GM10248 (cell line): ENCODE measurements at regions of chr15 and their contacts with region 1.

Region 1: DNA sequence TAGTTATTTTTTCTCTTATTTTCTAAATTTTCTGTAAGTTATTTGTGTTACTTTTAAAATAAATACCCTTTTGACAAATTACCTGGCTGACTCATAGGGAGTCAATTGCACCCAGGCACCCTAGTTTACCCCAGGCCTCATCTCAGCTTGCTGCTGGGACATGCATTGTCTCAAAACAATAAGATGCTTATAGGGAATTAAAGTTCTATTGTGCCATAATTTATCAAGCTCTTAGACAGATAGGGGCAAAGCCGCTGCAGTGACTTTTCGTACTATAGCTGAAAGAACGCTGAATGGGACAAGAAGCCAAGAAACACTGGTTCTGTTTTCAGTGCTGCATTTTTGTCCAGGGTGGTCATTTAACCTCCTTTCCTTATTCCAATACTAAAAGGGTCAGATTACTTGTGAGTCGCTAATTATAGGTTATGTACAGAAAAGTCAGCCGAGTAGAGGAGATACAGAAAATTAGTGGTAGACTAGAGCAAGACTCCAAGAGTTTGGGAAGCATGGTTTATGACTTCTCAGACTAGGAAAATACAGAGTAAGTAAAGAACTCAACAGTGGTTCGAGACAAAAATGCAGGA is 50.3 kb downstream of the EXD1 start:
- DNase-seq: no peak
- CTCF ChIP-seq: no peak

Region 2: GRCh38 chr15:41169781-41170180 is 10.5 kb before region 1 on chr15:
- CTCF ChIA-PET with region 1: interaction called, 15 read pairs
- POLR2A ChIA-PET with region 1: no interaction called
- DNase-seq: no peak
- CTCF ChIP-seq: no peak